WTC11 (cell line): ENCODE measurements at regions of chr20 and their contacts with region 1.

Region 1: GRCh38 chr20:49982346-49983122 is at the start of gene SNAI1:
- DNase-seq: peak; percentile 83
- ATAC-seq: peak; percentile 52
- H3K4me3 Mint-ChIP-seq: peak within 1 kb of the TSS; percentile 84
- H3K27ac Mint-ChIP-seq: peak within 1 kb of the TSS; percentile 30
- H3K4me1 Mint-ChIP-seq: peaks cover 76% of the 10 kb centered on the region
- H3K27me3 Mint-ChIP-seq: peaks cover 34% of the 10 kb centered on the region
- CTCF ChIP-seq: 0 out of 2 replicates have a peak, but pooled peaks have one; percentile 28
- total RNA-seq, gene SNAI1: 7.0 to 8.7 TPM (median 7.9 TPM) in 3 replicates

Region 2: DNA sequence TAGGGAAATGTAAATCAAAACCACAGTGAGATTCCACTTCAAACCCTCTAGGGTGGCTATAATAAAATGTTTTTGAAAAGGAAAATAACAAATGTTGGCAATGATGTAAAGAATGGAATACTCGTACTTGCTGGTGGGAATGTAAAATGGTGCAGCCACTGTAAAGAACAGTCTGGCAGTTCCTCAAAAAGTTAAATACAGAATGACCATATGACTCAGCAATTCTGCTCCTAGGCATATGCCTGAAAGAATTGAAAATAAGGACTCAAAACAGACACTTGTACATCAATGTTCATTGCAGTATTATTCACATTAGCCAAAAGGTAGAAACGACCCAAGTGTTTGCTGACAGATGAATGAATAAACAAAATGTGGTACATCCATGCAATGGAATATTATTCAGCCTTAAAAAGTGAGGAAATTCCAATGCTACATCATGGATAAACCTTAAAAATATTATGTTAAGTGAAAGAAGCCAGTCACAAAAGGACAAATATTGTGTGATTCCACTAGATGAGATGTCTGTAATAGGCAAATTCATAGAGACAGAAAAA is 56.6 kb before region 1 on chr20:
- CTCF ChIA-PET with region 1: no interaction called
- POLR2A ChIA-PET with region 1: no interaction called
- DNase-seq: no peak
- ATAC-seq: no peak
- H3K4me3 Mint-ChIP-seq: no peak overlapping the region
- H3K27ac Mint-ChIP-seq: no peak overlapping the region
- H3K4me1 Mint-ChIP-seq: peaks cover 4% of the 10 kb centered on the region; the same call in 1 of the 2 replicates
- H3K27me3 Mint-ChIP-seq: peaks cover 6% of the 10 kb centered on the region
- CTCF ChIP-seq: no peak

Region 3: GRCh38 chr20:49936153-49937027 is 46.1 kb before region 1 on chr20 and contains the start of gene RNF114:
- CTCF ChIA-PET with region 1: interaction called, 12 read pairs
- POLR2A ChIA-PET with region 1: no interaction called
- DNase-seq: peak; percentile 88
- ATAC-seq: peak; percentile 90
- H3K4me3 Mint-ChIP-seq: peak within 1 kb of the TSS; percentile 97
- H3K27ac Mint-ChIP-seq: peak within 1 kb of the TSS; percentile 93
- H3K4me1 Mint-ChIP-seq: peaks cover 30% of the 10 kb centered on the region
- H3K27me3 Mint-ChIP-seq: no peaks in the 10 kb centered on the region
- CTCF ChIP-seq: no peak
- total RNA-seq, gene RNF114: 86.6 to 91.6 TPM (median 88.1 TPM) in 3 replicates

Region 4: DNA sequence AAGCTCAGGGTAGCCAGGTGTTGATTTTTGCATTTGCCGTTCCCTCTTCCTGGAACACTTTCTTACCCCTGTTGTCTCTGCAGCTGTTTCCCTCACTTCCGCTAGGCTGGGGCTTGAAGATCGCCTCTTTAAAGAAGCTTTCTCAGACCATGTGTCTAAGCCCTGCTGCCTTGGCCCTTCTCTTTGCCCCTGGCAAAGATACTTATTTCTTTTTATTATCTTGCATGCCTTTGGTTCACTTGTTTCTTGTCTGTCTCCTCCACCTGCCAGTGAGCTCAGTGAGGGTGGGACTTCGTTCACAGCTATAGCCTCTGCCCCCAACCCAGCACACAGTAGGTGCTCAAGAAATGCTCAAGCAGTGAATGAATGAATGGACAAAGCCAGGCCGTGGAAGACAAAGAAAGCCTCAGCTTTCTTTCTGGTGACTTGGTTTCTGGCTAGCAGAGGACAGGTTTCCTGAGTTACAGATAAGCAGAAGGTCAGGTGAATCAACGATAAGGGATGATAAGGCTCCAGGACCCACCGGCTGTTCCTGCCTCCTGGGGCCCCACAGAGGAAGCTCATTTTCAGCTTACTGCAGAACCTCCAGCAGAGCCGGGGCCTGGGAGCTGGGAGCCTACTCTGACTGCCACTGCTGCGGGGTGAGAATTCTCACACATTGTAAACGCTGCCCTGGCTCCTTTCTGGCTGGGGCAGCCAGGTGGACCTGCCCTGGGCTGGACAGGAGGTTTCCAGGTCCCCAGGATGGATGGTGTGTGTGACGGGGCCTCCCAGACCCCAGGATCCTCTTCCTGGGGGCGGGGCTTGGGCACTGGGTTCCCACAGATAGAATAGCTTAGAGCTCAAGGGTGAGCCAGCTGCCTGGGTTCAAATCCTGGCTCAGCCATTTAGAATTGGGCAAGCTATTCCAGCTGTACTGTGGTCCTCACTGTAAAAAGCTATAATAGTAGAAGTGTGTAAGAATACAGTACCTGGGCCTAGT is 30.0 kb after region 1 on chr20:
- CTCF ChIA-PET with region 1: interaction called, 21 read pairs
- POLR2A ChIA-PET with region 1: no interaction called
- DNase-seq: no peak
- ATAC-seq: no peak
- H3K4me3 Mint-ChIP-seq: no peak overlapping the region
- H3K27ac Mint-ChIP-seq: no peak overlapping the region
- H3K4me1 Mint-ChIP-seq: peaks cover 36% of the 10 kb centered on the region
- H3K27me3 Mint-ChIP-seq: peaks cover 9% of the 10 kb centered on the region
- CTCF ChIP-seq: no peak

Region 5: DNA sequence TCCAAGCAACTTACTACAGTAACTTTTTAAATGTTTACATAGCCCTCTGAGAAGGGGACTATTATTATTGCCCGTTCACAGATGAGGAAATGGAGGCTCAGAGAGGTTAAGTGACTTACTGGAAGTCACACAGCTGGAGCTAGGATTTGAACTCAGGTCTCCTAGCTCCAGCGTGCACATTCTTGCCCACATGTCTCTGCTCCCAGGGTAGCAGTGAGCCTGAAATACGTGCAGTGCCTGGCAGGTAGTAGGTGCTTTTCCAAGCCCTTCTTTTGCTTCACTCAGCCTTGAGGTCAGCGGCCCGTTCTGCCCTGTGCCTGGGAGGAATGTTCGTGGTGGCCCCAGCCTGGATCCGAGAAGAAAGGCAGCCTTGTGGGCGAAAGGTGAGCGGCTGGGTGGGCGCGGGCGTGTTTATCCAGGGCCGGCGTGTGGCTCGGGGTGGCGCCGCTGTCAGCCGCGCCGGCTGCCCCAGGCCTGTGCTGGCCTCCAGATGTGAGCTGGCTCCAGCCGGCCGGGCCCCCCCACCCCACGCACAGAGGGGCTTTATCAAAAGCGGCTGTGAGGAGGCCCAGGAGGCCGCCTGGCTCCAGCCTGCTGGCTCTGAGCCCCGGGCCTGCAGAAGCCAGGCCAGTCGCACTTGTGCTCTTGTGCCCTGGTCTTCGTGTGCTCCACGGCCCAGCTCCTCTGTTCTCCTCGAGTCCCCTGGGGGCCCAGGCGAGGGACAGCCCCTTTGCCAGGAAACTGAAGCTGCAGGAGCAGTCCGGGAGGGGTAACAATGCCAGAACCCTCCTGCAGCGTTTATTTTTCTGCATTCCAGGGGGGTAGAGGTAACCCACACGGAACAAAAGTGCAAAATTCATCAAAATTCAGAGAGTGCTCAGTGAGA is 72.3 kb after region 1 on chr20:
- CTCF ChIA-PET with region 1: interaction called, 12 read pairs
- POLR2A ChIA-PET with region 1: no interaction called
- DNase-seq: no peak
- ATAC-seq: peak; percentile 39
- H3K4me3 Mint-ChIP-seq: no peak overlapping the region
- H3K27ac Mint-ChIP-seq: no peak overlapping the region
- H3K4me1 Mint-ChIP-seq: peaks cover 15% of the 10 kb centered on the region
- H3K27me3 Mint-ChIP-seq: no peaks in the 10 kb centered on the region
- CTCF ChIP-seq: no peak

Region 6: GRCh38 chr20:50085452-50086365 is 103.2 kb after region 1 on chr20:
- CTCF ChIA-PET with region 1: interaction called, 31 read pairs
- POLR2A ChIA-PET with region 1: no interaction called
- DNase-seq: peak; percentile 50
- ATAC-seq: peak; percentile 90
- H3K4me3 Mint-ChIP-seq: peak overlapping the region; percentile 31
- H3K27ac Mint-ChIP-seq: peak overlapping the region; percentile 87
- H3K4me1 Mint-ChIP-seq: peaks cover 27% of the 10 kb centered on the region
- H3K27me3 Mint-ChIP-seq: no peaks in the 10 kb centered on the region
- CTCF ChIP-seq: peak; percentile 62

Region 7: DNA sequence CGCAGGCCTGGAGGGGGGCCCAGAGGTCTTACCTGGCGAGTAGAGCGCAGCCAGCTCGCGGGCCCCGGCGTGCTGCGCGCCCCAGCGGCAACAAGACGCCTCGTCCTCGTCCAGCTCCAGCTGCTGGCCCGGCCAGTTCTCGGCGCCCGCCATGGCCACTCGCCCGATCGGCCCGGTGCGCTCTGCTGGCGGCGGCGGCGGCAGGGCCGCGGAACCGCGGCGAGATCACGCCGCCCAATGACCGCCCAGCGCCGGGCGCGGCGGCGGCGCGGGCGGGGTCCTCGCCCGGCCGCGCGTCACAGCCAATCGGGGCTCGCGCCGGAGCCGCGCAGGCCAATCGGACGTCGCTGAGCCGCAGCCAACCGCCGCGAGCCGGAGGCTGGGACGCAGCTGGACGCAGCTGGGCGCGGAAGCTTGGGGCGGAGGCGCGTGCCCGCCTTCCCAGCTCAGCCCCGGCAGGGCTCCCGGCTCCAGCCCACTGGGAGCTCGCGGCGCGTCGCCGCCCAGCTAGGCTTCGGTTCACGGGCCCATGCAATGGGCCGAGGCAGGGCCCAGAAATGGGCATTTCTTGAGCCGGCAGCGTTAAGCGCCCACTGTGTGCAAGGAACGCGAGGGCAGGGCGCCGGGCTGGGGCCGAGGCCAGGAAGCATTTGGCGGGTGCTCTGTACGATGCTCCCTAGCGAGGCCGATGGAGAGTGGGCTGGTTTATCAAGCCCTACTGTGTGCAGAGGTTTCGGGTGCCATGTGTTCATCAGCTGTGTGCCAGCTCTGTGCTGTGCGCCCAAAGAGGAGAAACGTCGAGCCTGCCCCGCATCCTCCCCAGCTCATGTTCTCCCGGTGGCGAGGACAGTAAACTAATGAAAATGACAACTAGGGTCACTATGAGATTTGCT is 171.2 kb after region 1 on chr20 and contains the start of gene PEDS1:
- CTCF ChIA-PET with region 1: interaction called, 19 read pairs
- POLR2A ChIA-PET with region 1: no interaction called
- DNase-seq: peak; percentile 88
- ATAC-seq: peak; percentile 91
- H3K4me3 Mint-ChIP-seq: peak within 1 kb of the TSS; percentile 83
- H3K27ac Mint-ChIP-seq: peak within 1 kb of the TSS; percentile 89
- H3K4me1 Mint-ChIP-seq: peaks cover 41% of the 10 kb centered on the region
- H3K27me3 Mint-ChIP-seq: peaks cover 15% of the 10 kb centered on the region
- CTCF ChIP-seq: no peak
- total RNA-seq, gene PEDS1: 35.0 to 36.7 TPM (median 35.6 TPM) in 3 replicates

Region 8: DNA sequence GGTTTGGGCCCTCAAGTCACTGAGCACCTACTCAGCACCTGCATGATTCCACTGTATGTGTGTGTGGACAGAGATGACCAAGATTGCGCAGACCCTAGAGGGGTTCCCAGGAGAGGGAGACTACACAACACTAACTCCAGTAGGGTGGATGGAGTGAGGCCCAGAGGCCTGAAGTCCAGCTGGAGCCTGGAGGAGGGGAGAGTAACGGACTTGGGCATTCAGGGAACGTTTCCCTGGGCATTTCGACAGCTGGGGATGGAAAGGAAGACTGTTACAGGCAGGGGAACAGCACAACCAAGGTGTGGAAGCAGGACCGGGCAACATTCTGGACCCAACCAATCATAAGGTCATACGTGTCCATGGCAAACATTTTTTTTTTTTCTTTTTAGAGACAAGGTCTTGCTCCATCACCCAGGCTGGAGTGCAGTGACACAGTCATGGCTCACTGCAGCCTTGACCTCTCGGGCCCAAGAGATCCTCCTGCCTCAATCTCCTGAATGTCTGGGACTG is 197.0 kb after region 1 on chr20:
- CTCF ChIA-PET with region 1: interaction called, 17 read pairs
- POLR2A ChIA-PET with region 1: no interaction called
- DNase-seq: no peak
- ATAC-seq: peak; percentile 53
- H3K4me3 Mint-ChIP-seq: no peak overlapping the region
- H3K27ac Mint-ChIP-seq: peak overlapping the region; percentile 95
- H3K4me1 Mint-ChIP-seq: 0 out of 2 replicates have a peak, but pooled peaks cover 3% of the 10 kb centered on the region
- H3K27me3 Mint-ChIP-seq: peaks cover 4% of the 10 kb centered on the region; the same call in 1 of the 2 replicates
- CTCF ChIP-seq: peak; percentile 34